ENCODE measurements at regions of chr9 and their contacts with region 1.

Region 1: GRCh38 chr9:38362852-38363593 is 29.5 kb upstream of the ALDH1B1 start:
- DNase-seq: peak; percentile 19
- H3K4me3 Mint-ChIP-seq: peak overlapping the region; percentile 42
- H3K27ac Mint-ChIP-seq: no peak overlapping the region
- H3K4me1 Mint-ChIP-seq: peaks cover 4% of the 10 kb centered on the region
- H3K27me3 Mint-ChIP-seq: peaks cover 3% of the 10 kb centered on the region

Region 2: GRCh38 chr9:38088006-38088925 is 274.8 kb before region 1 on chr9:
- CTCF ChIA-PET with region 1: interaction called, 11 read pairs
- POLR2A ChIA-PET with region 1: no interaction called
- DNase-seq: peak; percentile 72
- H3K4me3 Mint-ChIP-seq: no peak overlapping the region
- H3K27ac Mint-ChIP-seq: no peak overlapping the region
- H3K4me1 Mint-ChIP-seq: peaks cover 2% of the 10 kb centered on the region
- H3K27me3 Mint-ChIP-seq: peaks cover 26% of the 10 kb centered on the region

Measured in activated CD4-positive, alpha-beta memory T cell treated with anti-CD3 and anti-CD28 coated beads, Interleukin-2, amount 10 ng/mL, durations not matched to agents 7 days and 5 days (primary cell).